ENCODE measurements at regions of chr5 and their contacts with region 1.

Region 1: DNA sequence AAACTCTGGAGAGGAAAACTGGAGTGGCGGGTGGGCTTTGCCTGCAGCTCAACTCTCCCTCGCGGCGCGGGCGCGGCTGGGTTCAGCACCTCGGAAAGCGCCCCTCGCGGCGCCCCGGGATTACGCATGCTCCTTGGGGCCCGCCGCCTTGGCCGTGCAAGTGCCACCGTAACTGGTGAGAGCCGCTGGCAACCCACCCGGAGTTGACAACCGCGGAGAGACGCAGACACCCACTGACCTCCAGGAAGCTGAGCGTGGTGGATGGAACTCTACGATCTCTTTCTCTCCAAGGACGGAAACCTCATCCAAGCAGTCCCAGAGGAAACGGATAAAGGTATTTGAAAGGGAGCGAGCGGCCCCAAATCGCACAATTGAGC is 194 bp upstream of the RXFP3 start:
- DNase-seq: no peak

Region 2: GRCh38 chr5:33433303-33434240 is 502.4 kb before region 1 on chr5:
- intact Hi-C with region 1: loop called (anchors 5 kb)
- DNase-seq: no peak

Region 3: GRCh38 chr5:33468811-33469435 is 467.1 kb before region 1 on chr5:
- intact Hi-C with region 1: loop called (anchors 2 kb)
- DNase-seq: no peak

Measured in cardiac septum (tissue), 1 donor.